Lower lobe of right lung (tissue), 2 donors: ENCODE measurements at regions of chr7 and their contacts with region 1.

Region 1: GRCh38 chr7:47827351-47827756 is 120.9 kb downstream of the PKD1L1 start:
- DNase-seq: no peak
- ATAC-seq: peak in 1 of 2 donors; percentile 23
- H3K4me3 ChIP-seq: no peak overlapping the region
- H3K27ac ChIP-seq: no peak overlapping the region
- H3K4me1 ChIP-seq: no peaks in the 10 kb centered on the region
- H3K27me3 ChIP-seq: no peaks in the 10 kb centered on the region
- CTCF ChIP-seq: no peak

Region 2: GRCh38 chr7:47266131-47266706 is 561.1 kb before region 1 on chr7:
- intact Hi-C with region 1: loop called (anchors 10 kb)
- DNase-seq: peak; percentile 48
- ATAC-seq: peak; percentile 81 to 90
- H3K4me3 ChIP-seq: no peak overlapping the region
- H3K27ac ChIP-seq: no peak overlapping the region
- H3K4me1 ChIP-seq: peaks cover 12% of the 10 kb centered on the region
- H3K27me3 ChIP-seq: no peaks in the 10 kb centered on the region
- CTCF ChIP-seq: peak; percentile 91

Region 3: DNA sequence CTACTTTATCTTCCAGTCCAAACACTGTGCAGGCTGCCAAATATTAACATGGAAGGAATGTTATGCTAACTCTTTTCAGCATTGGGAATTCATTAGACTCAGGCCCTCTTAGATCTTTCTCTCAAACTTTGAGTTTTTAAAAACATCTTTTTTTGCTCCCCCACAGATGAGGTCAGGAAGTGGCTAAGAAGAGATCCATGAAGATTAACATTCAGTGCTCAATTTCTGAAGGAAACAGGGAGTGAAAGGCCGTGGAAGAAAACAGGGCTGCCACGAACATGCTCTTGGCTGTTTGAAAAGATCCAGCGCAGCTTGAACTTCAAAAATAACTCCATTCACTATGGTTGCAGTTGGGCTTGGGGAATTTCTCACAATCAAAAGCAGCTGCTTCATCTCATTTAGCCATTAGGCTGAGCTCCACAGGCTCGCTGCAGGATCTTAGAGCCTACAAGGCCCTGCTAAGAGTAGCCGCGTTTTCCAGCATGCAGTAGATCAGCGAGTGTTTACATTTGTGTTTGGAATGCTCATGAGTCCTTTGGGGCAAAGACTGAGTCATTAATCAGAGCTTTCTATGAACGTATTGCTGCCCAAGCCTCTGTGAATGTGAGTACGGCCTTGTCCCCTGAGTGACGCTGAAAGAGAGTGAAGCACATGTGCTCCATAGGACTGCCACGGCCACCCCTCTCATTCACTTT is 204.3 kb before region 1 on chr7:
- intact Hi-C with region 1: no loop called
- DNase-seq: no peak
- ATAC-seq: peak; percentile 76 to 86
- H3K4me3 ChIP-seq: no peak overlapping the region
- H3K27ac ChIP-seq: peak overlapping the region; percentile 56
- H3K4me1 ChIP-seq: peaks cover 11% of the 10 kb centered on the region
- H3K27me3 ChIP-seq: no peaks in the 10 kb centered on the region
- CTCF ChIP-seq: no peak

Region 4: DNA sequence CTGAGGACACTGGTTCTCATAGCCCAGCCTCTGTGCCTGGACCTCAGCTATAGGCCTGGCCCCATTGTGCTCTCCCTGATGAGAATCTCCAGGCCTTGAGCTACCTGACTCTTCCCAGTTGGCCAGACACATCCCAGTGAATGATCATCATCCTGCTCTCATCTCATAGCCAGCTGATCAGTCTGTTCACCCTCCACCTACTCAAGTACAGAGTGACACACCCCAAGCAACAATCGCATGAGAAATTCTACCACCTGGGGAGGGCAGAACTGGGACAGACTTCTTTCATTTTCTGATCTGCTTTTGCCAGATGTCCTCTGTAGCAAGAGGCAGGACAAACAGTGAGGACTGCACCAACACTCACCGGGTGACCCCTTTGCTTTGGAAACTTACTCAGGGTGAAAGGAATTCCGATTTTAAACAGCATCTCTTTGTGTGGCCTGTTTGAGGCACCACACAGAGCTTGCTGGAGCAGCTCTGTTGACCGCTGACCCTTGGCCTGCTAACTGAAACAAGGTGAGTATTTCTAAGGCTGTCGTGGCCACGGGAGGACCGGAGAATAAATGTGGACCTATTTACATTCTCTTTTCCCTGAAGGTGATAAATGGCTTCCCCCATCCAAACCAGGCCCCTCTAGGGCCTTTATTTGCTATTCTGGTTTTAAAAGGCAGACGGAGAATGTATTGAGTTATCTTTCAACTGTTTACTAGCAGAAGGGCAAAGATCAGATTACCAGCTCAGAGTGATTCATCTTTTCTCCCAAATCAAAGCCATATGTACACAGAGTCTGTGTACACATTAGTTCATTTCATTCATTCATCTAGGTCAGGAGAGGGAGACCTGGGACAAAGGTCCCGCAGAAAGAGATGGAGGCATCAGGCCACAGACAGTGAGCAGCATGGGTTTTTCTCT is 64.0 kb before region 1 on chr7:
- intact Hi-C with region 1: no loop called
- DNase-seq: no peak
- ATAC-seq: peak in 1 of 2 donors; percentile 43
- H3K4me3 ChIP-seq: no peak overlapping the region
- H3K27ac ChIP-seq: no peak overlapping the region
- H3K4me1 ChIP-seq: peaks cover 12% of the 10 kb centered on the region
- H3K27me3 ChIP-seq: no peaks in the 10 kb centered on the region
- CTCF ChIP-seq: no peak